Cardiac septum (tissue), 1 donor: ENCODE measurements at regions of chr12 and their contacts with region 1.

Region 1: DNA sequence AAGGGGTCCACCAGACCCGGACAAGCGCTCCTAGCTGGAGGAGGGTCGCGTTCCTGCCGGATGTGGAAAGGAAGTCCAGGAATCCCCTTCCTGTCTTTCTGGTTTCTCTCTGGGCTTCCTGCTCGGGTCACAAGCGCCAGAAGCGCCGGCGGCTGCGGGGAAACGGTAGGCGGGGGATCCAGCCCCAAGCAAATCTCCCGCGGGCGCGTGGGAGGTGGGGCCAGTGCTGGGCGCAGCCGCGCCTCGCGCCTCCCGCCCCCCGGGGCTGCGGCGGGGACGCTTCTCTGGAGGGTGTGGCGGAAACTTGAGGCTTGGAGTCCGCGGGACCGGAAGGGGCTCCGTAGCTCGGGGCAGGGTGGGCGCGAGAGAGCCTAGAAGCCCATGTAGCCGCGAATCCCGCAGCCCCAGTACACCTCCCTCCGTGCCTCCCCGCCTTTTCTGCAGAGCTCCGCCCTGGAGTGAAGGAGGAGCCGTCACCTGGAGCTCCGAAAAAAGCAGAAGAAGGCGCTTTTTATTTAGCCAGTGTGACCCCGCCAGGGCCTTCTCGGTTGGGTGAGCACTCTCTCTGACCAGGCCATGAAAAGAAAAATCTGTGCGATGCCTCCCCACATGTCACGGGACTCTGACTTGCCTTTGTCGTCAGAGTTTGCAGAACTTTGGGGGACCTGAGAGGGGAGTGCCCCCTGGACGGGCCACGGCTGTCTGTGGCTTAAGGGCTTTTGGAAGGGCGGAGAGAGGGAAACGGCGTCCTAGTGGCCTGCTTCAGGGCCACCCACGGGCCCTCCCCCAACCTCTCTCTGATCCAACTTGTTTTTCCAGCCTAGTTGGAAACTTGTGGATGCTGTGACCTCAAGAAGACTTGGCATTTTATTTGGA is 21.4 kb upstream of the CLEC2D start:
- DNase-seq: peak; percentile 93

Region 2: GRCh38 chr12:9702255-9702654 is 54.2 kb after region 1 on chr12:
- intact Hi-C with region 1: loop called (anchors 5 kb)
- DNase-seq: no peak

Region 3: GRCh38 chr12:9736936-9737705 is 89.1 kb after region 1 on chr12:
- intact Hi-C with region 1: loop called (anchors 5 kb)
- DNase-seq: no peak

Region 4: DNA sequence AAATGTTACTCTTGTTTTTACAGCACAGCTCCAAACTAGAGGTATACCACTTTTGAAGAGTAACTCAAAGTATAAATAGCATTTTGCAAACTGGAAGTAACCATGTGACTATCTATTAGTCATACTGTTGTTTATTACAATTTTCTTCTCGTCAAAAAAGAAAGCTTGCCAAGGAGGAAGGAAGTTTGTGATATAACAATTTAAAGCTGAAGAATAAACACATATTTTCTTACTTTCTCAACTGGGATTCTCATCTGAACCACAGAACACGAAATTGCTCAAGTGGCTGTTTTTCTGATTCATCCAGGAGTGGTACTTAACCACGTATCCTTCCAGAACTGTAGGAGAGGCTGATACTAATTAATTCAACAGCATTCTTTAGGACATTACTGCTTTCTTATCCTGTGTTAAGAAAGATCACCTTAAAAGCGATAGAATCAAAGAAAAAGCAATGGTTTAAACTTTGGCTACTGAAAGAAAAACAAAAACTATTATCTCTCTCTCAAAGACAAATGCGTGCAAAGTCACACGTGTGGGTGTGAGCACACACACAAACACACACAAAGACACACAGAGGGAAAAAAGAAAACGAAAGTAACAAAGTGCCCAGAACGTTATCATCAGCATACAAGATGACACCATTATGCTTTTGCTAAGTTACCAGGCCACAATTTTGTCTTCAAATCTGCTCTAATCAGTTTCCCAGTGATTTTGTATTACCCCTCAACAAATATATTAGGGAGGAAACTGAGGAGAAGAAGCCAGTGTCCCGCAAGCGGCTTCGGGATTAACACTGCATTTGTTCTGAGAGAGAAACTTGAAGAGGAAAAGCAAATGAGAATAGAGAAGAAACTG is 221.5 kb after region 1 on chr12 and contains the start of gene CLEC2B:
- intact Hi-C with region 1: loop called (anchors 10 kb)
- DNase-seq: no peak
- total RNA-seq, gene CLEC2B: 6.7 TPM